ENCODE measurements at regions of chr1 and their contacts with region 1.

Region 1: DNA sequence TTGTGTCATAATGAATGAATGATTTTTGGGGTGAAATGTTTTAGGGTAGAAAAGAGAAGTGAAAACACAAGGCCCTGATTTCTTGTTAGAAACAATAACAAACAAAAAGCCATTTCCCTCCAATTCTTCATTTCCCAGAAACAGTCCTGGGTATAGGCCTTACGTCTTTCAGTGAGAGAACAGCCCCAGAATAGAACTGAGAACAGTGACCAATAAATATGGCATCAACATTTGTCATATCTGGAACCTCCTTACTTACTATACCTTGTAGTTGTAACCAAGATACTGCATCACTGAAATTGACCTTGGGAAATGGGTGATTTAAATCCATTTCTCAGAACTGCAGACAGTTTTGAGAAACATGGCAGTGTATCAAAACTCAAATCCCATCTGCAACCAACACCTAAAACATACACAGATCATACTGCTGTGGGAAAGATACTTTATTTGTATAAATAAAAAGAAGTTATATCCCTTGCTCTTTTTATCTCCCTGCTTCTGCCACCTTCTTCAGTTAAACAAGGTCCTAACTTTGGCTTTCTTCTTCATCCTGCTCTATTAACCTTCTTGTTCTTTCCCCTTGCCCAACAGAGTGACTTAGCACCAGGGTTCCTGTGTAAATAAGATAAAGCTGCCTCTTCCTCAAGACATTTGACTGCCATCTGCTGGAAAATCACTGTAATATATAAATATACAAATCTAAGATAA is 19.5 kb downstream of the XKR8 start:
- DNase-seq: peak; percentile 73
- H3K4me3 ChIP-seq: no peak overlapping the region
- H3K27ac ChIP-seq: no peak overlapping the region
- H3K4me1 ChIP-seq: peaks cover 8% of the 10 kb centered on the region
- H3K27me3 ChIP-seq: no peaks in the 10 kb centered on the region
- CTCF ChIP-seq: peak; percentile 63

Region 2: GRCh38 chr1:27858072-27858958 is 121.0 kb before region 1 on chr1:
- CTCF ChIA-PET with region 1: interaction called, 9 read pairs
- POLR2A ChIA-PET with region 1: no interaction called
- intact Hi-C with region 1: loop called (anchors 1 kb)
- DNase-seq: peak; percentile 93
- H3K4me3 ChIP-seq: no peak overlapping the region
- H3K27ac ChIP-seq: no peak overlapping the region
- H3K4me1 ChIP-seq: peaks cover 4% of the 10 kb centered on the region
- H3K27me3 ChIP-seq: no peaks in the 10 kb centered on the region
- CTCF ChIP-seq: peak; percentile 98

Region 3: DNA sequence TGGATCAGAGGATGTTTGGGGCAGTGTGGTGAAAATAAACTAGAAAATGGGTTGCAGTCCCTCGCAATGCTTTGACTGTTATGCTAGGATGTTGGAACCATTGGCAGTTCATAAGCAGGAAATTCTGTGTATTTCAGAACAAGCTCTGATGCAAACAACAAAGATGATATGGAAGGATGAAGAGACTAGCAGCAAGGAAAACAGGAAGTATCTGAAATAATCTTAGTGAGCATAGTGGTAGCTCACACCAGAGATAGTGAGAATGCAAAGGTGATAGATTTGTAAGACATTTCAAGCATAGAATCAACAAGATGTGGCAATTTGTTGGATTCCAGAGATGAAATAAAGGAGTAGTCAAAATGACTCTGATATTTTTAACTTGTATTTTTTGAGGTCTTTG is 515.4 kb after region 1 on chr1:
- CTCF ChIA-PET with region 1: no interaction called
- POLR2A ChIA-PET with region 1: no interaction called
- intact Hi-C with region 1: no loop called
- DNase-seq: no peak
- H3K4me3 ChIP-seq: no peak overlapping the region
- H3K27ac ChIP-seq: no peak overlapping the region
- H3K4me1 ChIP-seq: no peaks in the 10 kb centered on the region
- H3K27me3 ChIP-seq: no peaks in the 10 kb centered on the region
- CTCF ChIP-seq: no peak